Activated T-helper 2 cell treated with anti-CD3 and anti-CD28 coated beads, Interferon-gamma antibody, Interleukin-2, Interleukin-4, amounts not matched to agents 10 μg/mL and 5 μg/mL and 100 μg/mL, durations not matched to agents 14 hours and 24 hours and 36 hours (primary cell): ENCODE measurements at regions of chr16 and their contacts with region 1.

Region 1: GRCh38 chr16:636206-637080 is at the start of gene METTL26:
- DNase-seq: peak; percentile 91
- H3K4me3 Mint-ChIP-seq: peak within 1 kb of the TSS; percentile 90
- H3K27ac Mint-ChIP-seq: peak within 1 kb of the TSS; percentile 89
- H3K4me1 Mint-ChIP-seq: peaks cover 8% of the 10 kb centered on the region
- H3K27me3 Mint-ChIP-seq: no peaks in the 10 kb centered on the region
- total RNA-seq, gene METTL26: 128 and 131 TPM in 2 replicates

Region 2: DNA sequence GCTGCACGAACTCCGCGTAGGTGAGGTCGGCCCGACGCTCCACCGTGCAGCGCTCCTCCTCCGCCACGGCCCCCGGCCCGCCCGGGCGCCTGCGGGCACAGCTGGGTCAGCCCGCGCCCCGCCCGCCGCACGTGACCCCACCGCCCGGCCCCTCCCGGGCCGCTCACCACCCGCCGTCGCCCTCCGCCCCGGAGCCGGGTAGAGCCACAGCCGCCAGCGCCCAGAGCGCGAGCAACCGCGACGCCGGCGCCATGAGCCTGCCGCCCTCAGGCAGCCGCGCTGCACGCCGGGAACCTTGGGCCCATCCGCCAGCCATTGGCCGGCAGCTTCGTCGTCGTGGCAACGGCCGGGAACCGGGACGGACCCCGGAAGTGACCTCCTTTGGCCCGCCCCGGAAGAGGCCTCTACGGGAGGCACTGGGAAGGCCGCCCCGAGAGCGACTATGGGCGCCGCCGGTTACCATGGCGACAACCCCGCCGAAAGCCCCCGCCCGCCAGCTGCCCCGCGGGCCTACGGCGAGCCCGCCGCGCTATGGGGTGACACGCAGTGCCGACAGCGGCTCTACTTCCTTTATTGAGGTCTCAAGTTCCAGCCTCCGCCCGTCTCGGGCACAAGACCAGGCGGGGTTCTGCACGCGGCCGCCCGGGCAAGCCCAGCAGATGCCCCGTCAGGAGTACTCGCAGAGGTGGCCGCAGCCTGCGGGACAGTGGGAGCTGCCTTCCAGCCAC is 47.8 kb after region 1 on chr16 and contains the start of gene JMJD8:
- intact Hi-C with region 1: loop called (anchors 5 kb)
- DNase-seq: peak; percentile 95
- H3K4me3 Mint-ChIP-seq: peak within 1 kb of the TSS; percentile 76
- H3K27ac Mint-ChIP-seq: peak within 1 kb of the TSS; percentile 52
- H3K4me1 Mint-ChIP-seq: peaks cover 15% of the 10 kb centered on the region
- H3K27me3 Mint-ChIP-seq: no peaks in the 10 kb centered on the region
- total RNA-seq, gene JMJD8: 48.8 and 52.9 TPM in 2 replicates

Region 3: DNA sequence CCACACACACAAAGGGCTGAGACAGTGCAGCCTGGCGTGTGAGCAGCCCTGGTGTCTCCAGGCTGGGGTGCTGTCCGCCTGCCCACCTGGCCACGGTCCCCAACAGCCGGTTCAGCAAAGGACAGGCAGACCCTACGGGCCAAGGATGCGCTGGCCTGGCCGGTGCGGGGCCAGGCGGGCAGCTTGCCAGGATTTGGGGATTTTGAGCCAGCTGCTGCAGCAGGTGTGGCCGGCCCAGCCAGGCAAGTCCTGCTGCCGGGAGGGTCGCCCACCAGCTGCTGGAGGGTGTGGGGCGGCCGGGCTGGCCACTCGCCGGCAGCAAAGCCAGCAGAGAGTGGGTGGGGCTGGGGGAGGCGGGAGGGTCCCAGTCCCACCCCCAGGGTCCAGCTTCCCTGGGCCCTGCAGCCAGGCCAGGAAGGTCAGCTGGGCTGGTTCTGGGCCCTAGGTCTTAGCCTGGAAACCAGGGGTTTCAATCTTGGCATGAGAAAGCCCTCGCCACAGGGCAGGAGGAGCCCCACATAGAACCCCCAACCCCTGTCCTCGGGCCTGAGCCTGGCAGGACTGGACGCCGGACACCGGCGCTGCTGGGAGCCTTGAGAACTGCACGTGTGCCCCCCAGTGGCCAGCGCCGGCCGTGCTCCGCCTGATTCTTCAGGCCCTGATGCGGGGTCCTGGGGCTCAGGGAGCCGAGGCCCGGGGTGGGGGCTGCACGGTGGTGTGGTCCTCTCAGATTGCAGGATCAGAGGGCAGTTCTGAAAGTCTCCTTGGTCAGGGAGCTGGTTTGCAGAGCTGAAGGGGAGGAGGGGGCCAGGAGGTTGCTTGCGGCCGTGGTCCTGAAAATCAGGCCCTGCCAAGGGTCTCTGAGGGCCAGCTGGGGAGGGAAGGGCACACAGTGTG is 418.5 kb after region 1 on chr16:
- intact Hi-C with region 1: no loop called
- DNase-seq: no peak
- H3K4me3 Mint-ChIP-seq: no peak overlapping the region
- H3K27ac Mint-ChIP-seq: no peak overlapping the region
- H3K4me1 Mint-ChIP-seq: no peaks in the 10 kb centered on the region
- H3K27me3 Mint-ChIP-seq: no peaks in the 10 kb centered on the region